Calu3 (cell line): ENCODE measurements at regions of chr15 and their contacts with region 1.

Region 1: GRCh38 chr15:65184868-65185738 is at the start of gene CLPX:
- DNase-seq: peak; percentile 92
- H3K4me3 Mint-ChIP-seq: peak within 1 kb of the TSS; percentile 95
- H3K27ac Mint-ChIP-seq: peak within 1 kb of the TSS; percentile 20
- H3K4me1 Mint-ChIP-seq: no peaks in the 10 kb centered on the region
- H3K27me3 Mint-ChIP-seq: no peaks in the 10 kb centered on the region
- CTCF ChIP-seq: no peak
- total RNA-seq, gene CLPX: 44.9 and 50.3 TPM in 2 replicates

Region 2: GRCh38 chr15:65133548-65134200 is 51.4 kb before region 1 on chr15 and contains the start of gene PDCD7:
- CTCF ChIA-PET with region 1: no interaction called
- intact Hi-C with region 1: no loop called
- DNase-seq: peak; percentile 82
- H3K4me3 Mint-ChIP-seq: peak within 1 kb of the TSS; percentile 88
- H3K27ac Mint-ChIP-seq: peak within 1 kb of the TSS; percentile 97
- H3K4me1 Mint-ChIP-seq: peaks cover 13% of the 10 kb centered on the region
- H3K27me3 Mint-ChIP-seq: no peaks in the 10 kb centered on the region
- CTCF ChIP-seq: no peak
- total RNA-seq, gene PDCD7: 26.4 and 33.9 TPM in 2 replicates

Region 3: DNA sequence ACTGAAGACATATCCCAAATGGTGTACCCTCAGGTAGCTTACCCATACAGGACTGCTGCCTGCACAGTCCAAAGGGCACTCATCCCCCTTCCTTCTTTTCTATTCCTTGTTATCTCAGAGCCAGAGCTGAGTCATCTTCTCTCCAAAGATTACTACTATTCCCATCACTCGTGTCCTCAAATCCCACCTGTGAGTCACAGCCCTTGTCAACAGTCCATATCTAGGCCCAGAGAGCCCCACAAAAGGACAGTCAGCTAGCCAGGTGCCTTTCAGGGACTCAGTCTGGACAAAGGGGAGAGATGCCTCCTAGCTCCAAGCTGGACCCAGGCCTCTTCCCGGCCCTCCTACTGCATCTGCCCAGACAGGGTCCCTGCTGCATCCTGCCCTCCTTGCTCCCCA is 90.6 kb after region 1 on chr15:
- CTCF ChIA-PET with region 1: interaction called, 5 read pairs
- intact Hi-C with region 1: loop called (anchors 1 kb)
- DNase-seq: no peak
- H3K4me3 Mint-ChIP-seq: no peak overlapping the region
- H3K27ac Mint-ChIP-seq: no peak overlapping the region
- H3K4me1 Mint-ChIP-seq: peaks cover 17% of the 10 kb centered on the region
- H3K27me3 Mint-ChIP-seq: no peaks in the 10 kb centered on the region
- CTCF ChIP-seq: no peak

Region 4: GRCh38 chr15:65304389-65305144 is 119.5 kb after region 1 on chr15 and contains the start of gene RNU5B-1:
- CTCF ChIA-PET with region 1: interaction called, 3 read pairs
- intact Hi-C with region 1: loop called (anchors 2 kb)
- DNase-seq: peak; percentile 86
- H3K4me3 Mint-ChIP-seq: peak within 1 kb of the TSS; percentile 87
- H3K27ac Mint-ChIP-seq: peak within 1 kb of the TSS; percentile 100
- H3K4me1 Mint-ChIP-seq: peaks cover 11% of the 10 kb centered on the region
- H3K27me3 Mint-ChIP-seq: no peaks in the 10 kb centered on the region
- CTCF ChIP-seq: no peak
- total RNA-seq, gene RNU5B-1: 20.3 and 25.8 TPM in 2 replicates